ENCODE measurements at regions of chr1 and their contacts with region 1.

Region 1: DNA sequence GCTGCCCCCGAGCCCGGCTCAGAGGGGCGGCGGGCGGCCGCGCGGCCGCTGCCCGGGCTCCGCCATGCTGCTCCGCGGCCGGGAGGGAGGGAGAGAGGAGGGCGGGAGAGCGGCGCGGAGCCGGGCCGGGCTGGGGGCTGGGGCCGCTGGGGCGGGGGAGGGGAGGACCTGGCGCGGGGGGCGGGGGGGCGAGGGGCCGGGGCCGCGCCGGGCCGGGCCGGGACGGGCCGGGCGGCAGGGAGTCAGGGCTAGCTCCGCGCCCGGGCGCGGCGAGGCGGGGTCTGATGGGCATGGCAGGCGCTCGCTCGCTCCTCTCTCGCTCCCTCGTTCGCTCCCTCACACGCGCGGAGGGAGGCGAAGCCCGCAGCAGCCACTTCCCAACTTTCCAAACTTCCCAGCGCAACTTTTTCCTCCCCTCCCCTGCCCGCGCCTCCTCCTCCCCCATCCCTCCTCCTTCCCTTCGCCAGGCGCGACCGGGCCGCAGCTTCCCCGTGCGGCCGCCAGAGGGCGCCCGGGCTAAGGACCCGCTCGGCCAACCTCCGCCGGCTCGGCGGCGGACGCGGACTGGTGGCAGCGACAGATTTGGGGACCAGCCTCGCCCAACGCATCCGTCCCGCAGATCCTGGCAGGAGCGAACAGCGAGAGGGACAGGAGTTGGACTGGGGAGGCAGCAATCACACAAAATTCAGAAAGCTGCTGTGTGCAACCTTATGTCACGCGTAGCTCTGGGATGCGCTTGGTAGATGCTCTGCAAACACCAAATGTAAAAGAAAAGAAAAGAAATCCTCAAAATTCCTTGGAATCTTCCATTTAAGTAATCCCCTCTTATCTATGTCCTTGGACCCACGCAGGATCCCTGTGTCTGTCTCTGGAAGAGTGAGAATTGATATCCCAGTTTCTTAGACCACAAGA is at the start of gene TRABD2B:
- DNase-seq: peak; percentile 80 to 95
- H3K4me3 ChIP-seq: peak within 1 kb of the TSS; percentile 96 to 100
- H3K27ac ChIP-seq: peak within 1 kb of the TSS; percentile 100
- H3K4me1 ChIP-seq: peaks cover 0 to 39% (median 29%) of the 10 kb centered on the region in 4 donors
- H3K27me3 ChIP-seq: no peaks in the 10 kb centered on the region
- CTCF ChIP-seq: peak; percentile 97 to 98

Region 2: DNA sequence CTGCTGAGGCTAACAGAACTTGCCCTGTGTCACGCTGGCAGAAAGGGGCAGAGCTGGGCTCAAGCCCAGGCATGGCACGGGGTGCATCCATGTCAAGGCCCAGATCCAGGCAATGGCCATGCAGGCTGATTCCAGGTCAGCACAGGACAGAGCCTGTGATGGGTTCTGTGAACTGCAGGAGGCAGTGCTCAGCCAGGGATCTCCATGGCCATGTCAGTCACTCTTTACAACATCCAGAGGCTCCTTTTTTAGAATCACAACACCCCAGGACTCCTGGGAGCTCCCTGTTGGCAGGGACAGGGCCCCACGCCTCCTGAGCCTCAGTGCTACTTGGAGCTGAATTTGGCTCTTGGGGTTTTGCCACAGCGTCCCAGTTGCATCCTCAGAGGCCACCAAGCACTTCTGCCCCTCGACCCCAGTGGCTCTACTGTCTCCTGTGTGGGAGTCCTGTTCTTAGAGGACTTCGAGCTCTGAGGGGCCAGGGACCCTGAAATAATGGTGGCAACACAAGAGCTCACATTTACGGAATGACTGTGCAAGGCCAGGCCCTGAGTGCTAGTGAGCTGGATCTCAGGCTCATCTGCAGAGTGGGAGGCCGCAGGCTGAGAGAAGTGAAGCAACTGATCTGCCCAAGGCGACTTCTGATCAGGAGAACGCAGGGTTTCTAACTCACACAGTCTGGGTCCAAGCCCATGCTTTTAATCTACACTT is 211.8 kb before region 1 on chr1:
- intact Hi-C with region 1: loop called (anchors 10 kb)
- DNase-seq: peak; percentile 73 to 94
- H3K4me3 ChIP-seq: no peak overlapping the region
- H3K27ac ChIP-seq: peak overlapping the region; percentile 80 to 82
- H3K4me1 ChIP-seq: peaks cover 0 to 66% (median 60%) of the 10 kb centered on the region in 4 donors
- H3K27me3 ChIP-seq: no peaks in the 10 kb centered on the region
- CTCF ChIP-seq: peak; percentile 73 to 83

Region 3: GRCh38 chr1:47934243-47934805 is 63.2 kb before region 1 on chr1:
- intact Hi-C with region 1: loop called (anchors 2 kb)
- DNase-seq: peak; percentile 94 to 96
- H3K4me3 ChIP-seq: no peak overlapping the region
- H3K27ac ChIP-seq: peak overlapping the region; percentile 70 to 71
- H3K4me1 ChIP-seq: peaks cover 0 to 77% (median 49%) of the 10 kb centered on the region in 4 donors
- H3K27me3 ChIP-seq: no peaks in the 10 kb centered on the region
- CTCF ChIP-seq: peak in 1 of 2 experiments; percentile 12

Region 4: DNA sequence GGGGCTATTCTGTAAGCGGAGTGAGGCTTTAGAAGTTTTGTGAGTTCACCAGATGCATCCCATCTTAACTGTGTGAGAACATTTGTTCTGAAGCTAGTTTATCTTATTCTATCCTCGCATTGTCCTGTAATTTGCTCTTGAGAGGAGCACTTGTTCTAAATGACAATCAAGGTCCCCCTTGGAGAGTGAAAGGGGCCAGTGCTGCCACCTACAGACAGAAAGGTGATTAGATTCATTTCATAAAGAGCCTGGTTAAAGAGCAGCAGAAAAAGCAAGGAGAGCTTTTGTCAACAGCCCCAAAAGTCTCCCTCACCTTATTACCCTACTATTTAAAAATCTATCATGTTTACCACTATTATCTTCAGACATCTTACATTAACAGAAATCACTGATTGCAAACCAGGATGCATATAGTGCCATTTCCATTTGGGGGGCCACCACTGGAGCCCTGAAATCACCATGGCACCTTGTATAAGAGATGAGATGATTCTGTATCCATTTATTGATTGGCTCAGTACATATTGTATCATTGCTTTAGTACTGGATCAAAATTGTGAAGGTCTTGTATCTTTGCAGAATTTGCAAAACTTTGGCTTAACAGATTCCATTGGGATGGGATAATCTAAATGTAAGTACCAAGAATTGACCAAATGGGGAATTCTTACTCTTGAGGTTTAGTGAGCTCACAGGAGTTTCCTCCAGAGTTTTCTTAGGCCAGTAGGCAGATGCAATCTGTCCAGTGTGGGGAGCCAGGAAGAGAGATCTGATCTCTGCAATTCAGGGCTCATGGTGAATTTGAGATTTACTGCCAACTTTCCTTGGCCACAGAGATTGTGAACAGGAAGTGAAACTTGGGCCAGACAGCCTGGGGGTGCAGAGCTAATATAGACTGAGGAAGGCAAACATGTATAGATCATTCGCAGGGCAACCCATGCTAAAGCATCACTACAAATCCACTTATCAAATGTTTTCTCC is 63.9 kb after region 1 on chr1:
- intact Hi-C with region 1: loop called (anchors 2 kb)
- DNase-seq: peak in 1 of 2 donors; percentile 59
- H3K4me3 ChIP-seq: no peak overlapping the region
- H3K27ac ChIP-seq: no peak overlapping the region
- H3K4me1 ChIP-seq: peaks cover 0 to 12% (median 9%) of the 10 kb centered on the region in 4 donors
- H3K27me3 ChIP-seq: no peaks in the 10 kb centered on the region
- CTCF ChIP-seq: peak; percentile 75 to 80

Measured in tibial artery (tissue), 4 donors.